AG04450 (cell line): ENCODE measurements at regions of chr21 and their contacts with region 1.

Region 1: DNA sequence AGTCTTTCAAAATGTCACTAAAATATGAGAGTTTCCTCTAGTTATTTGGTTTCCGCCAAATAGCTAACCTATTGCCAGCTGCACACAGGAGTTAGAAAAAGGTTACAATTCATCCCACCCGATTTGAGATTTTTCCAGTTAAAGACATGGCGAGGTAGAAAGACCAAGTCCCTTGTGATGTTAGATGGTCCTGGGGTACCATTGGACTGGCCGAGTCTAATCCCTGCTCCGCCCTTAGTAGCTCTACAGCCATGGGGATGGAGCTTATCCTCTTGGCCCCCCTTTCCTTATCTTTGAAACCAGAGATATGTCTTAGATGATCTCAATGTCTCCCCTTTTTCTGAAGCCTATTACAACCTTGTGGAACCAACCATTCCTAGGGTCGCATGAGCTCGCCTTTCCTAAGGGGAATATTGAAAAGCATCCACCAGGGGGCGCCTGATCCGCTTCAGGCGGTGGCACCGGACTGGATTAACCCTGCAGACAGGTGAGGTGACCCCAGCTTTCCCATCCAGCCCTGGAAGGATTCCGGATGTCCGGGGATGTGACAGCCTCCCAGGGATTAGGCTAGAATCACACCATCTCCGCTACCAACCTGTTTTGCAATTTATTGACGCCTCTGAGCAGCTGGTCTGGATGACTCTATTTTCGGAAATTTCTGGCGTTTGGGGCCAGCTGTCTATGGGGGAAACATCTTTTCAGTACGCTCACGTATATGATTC is 68.3 kb upstream of the SIM2 start:
- DNase-seq: no peak
- H3K4me3 ChIP-seq: no peak overlapping the region
- H3K27ac ChIP-seq: no peak overlapping the region
- H3K27me3 ChIP-seq: peaks cover 8% of the 10 kb centered on the region
- CTCF ChIP-seq: peak; percentile 74

Region 2: DNA sequence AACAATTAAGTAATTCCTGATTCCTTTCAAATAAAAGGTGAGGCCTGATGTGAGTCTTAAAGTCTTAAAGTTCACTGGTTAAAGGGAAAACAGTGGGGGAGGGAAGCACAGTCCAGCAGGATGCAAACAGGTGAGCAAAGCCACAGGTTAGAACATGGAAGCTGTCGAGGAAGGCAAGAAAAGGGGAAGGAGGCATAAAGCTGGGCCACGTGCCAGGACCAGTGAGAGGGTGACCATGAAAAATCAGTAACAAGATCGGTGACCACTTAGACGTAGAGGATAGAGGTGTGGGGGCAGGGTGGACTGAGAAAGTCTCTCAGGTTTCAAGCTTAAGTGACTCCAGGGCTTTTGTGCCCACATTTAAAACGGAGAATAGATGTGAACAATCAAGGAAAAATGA is 801.6 kb before region 1 on chr21:
- CTCF ChIA-PET with region 1: no interaction called
- POLR2A ChIA-PET with region 1: no interaction called
- DNase-seq: no peak
- H3K4me3 ChIP-seq: no peak overlapping the region
- H3K27ac ChIP-seq: no peak overlapping the region
- H3K27me3 ChIP-seq: no peaks in the 10 kb centered on the region
- CTCF ChIP-seq: no peak

Region 3: GRCh38 chr21:36610201-36610600 is 20.4 kb before region 1 on chr21:
- CTCF ChIA-PET with region 1: interaction called, 16 read pairs
- POLR2A ChIA-PET with region 1: no interaction called
- DNase-seq: no peak
- H3K4me3 ChIP-seq: no peak overlapping the region
- H3K27ac ChIP-seq: no peak overlapping the region
- H3K27me3 ChIP-seq: peaks cover 12% of the 10 kb centered on the region
- CTCF ChIP-seq: no peak

Region 4: GRCh38 chr21:36647279-36648093 is 16.8 kb after region 1 on chr21:
- CTCF ChIA-PET with region 1: interaction called, 12 read pairs
- POLR2A ChIA-PET with region 1: no interaction called
- DNase-seq: no peak
- H3K4me3 ChIP-seq: no peak overlapping the region
- H3K27ac ChIP-seq: no peak overlapping the region
- H3K27me3 ChIP-seq: peaks cover 5% of the 10 kb centered on the region
- CTCF ChIP-seq: no peak

Region 5: GRCh38 chr21:36654324-36654723 is 23.7 kb after region 1 on chr21:
- CTCF ChIA-PET with region 1: interaction called, 10 read pairs
- POLR2A ChIA-PET with region 1: no interaction called
- DNase-seq: no peak
- H3K4me3 ChIP-seq: no peak overlapping the region
- H3K27ac ChIP-seq: no peak overlapping the region
- H3K27me3 ChIP-seq: peaks cover 11% of the 10 kb centered on the region
- CTCF ChIP-seq: no peak

Region 6: GRCh38 chr21:36684957-36685714 is 54.5 kb after region 1 on chr21:
- CTCF ChIA-PET with region 1: interaction called, 24 read pairs
- POLR2A ChIA-PET with region 1: no interaction called
- DNase-seq: no peak
- H3K4me3 ChIP-seq: no peak overlapping the region
- H3K27ac ChIP-seq: no peak overlapping the region
- H3K27me3 ChIP-seq: peaks cover 54% of the 10 kb centered on the region
- CTCF ChIP-seq: no peak

Region 7: GRCh38 chr21:36917471-36918158 is 287.0 kb after region 1 on chr21:
- CTCF ChIA-PET with region 1: interaction called, 16 read pairs
- POLR2A ChIA-PET with region 1: no interaction called
- DNase-seq: peak; percentile 32
- H3K4me3 ChIP-seq: no peak overlapping the region
- H3K27ac ChIP-seq: no peak overlapping the region
- H3K27me3 ChIP-seq: no peaks in the 10 kb centered on the region
- CTCF ChIP-seq: peak; percentile 88

Region 8: DNA sequence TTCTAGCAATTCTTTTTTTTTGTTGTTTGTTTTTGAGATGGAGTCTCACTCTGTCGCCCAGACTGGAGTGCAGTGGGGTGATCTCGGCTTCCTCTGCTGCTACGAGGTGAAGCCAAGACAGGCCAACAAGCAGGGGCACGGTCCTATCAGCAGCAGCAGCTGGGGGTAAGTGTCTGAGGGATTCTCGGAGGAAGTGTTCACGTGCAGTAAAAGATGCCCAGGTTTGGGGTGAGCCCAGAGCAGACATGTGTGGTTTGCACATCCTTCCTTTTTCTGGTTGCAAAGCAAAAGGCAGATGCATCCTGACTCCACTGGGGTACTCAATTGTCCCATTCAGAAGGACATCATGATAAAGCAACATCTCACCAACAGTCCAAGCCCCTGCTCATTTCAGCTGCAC is 414.5 kb after region 1 on chr21:
- CTCF ChIA-PET with region 1: no interaction called
- POLR2A ChIA-PET with region 1: no interaction called
- DNase-seq: no peak
- H3K4me3 ChIP-seq: no peak overlapping the region
- H3K27ac ChIP-seq: no peak overlapping the region
- H3K27me3 ChIP-seq: peaks cover 15% of the 10 kb centered on the region
- CTCF ChIP-seq: no peak